GM18951 (cell line): ENCODE measurements at regions of chr2 and their contacts with region 1.

Region 1: DNA sequence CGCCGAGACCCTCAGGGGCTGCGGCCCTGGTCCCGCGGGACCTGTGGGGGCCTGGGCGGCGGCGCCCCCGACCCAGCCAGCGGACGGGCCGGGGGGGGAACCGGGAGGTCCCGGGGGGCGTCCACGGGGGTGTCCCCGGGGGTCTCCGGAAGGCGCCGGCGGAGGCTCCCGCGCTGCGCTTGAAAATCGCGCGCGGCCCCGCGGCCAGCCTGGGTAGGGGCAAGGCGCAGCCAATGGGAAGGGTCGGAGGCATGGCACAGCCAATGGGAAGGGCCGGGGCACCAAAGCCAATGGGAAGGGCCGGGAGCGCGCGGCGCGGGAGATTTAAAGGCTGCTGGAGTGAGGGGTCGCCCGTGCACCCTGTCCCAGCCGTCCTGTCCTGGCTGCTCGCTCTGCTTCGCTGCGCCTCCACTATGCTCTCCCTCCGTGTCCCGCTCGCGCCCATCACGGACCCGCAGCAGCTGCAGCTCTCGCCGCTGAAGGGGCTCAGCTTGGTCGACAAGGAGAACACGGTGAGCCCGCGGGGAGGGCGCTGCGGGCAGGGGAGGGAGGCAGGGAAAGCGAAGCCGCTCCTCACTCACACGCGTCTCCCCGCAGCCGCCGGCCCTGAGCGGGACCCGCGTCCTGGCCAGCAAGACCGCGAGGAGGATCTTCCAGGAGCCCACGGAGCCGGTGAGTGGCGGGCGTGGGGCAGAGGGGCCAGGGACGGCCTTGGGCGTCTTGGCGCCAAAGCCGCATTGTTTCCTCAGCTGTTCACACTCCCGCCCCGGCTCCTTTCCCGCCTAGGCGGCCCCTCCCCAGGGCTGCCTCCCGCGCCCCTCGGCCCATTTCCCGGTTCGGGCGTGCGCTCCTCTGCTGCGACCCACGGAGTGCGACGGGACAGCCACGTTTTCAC is at the start of gene RRM2:
- POLR2A ChIP-seq: peak; percentile 99

Region 2: DNA sequence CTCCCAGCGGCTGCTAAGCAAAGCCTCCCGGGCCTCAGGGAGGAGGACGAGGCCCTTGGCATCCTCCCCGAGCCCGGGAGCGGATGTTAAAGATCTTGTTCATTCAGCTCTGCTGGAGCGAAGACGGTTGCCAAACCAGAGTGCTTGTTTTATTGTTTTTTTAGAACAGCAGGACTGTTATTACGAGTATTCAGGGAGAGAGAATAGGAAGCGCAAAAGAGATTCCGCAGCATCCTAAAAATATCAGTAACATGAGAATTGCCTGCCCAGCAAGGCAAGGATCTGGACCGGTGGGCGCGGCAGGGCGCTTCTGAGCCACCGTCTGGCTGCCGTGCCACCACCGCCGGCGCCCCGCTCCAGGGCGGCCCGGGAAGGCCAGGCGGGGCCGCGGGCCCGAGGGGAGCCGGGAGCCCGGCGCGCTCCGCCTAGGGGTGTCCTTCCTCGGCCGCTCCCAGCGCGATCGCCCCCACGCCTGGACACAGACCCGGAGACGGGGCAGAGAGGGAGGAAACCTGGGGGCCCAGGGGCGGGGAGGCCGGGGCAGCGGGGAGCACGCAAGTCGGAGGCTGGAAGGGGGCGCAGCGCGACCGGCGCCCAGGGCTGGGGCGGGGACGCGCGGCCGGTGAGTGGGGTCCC is 43.3 kb before region 1 on chr2:
- in situ Hi-C with region 1: loop called (anchors 5 kb)
- POLR2A ChIP-seq: no peak

Region 3: DNA sequence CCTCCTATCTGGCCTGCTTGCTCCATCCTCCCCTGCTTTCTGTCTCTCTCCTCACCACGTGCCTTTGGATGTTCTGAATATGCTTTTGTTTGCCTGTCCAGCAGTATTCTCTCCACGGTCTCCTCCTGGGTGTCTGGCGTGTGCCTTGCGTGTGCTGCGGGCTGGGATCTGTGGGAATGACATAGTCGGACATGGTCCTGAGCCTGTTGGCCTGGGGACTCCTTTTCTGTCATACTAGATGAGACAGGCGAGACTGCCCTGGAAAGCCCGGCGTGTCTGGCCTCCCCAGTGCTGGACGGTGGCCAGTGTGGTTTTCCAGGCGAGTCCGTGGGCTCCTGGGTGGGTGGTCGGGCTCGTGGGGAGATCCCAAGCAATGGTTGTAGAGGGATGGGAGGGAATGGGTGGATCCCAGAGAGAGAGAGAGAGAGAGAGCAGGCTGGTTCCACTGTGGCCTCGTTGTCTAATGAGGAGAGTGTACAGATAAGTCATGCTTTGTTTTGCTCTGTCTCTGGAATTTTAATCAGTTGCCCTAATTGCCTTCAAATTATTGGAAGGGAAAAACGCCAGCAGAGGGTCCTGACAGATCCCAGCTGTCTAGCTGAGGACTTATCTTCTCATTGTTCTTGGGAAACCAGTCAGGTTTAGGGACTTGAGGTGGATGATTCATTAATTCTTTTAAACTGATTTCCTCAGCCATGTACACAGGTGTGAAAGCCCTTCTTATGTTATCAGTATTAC is 238.4 kb after region 1 on chr2:
- in situ Hi-C with region 1: no loop called
- POLR2A ChIP-seq: no peak